Aorta (tissue), 5 donors: ENCODE measurements at regions of chr15 and their contacts with region 1.

Region 1: DNA sequence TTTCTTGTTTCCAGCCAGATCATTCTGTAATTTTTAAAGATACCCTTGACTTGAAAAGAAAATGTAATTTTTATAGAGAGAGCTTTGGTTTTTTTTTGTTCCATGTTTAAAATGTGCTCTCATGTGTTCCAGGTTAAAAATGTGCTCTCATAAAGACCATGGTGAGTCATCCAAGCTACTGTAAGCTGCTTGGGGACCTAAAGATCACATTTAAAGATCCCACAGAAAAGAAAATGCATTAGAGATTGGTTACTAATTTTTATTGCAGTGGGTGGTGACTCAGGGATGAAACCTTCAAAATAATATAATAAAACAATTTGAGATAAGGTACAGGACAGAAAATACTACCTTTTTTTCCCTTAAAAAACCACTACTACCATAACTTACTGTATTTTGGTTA is 11.0 kb downstream of the TCF12 start:
- DNase-seq: no peak
- ATAC-seq: no peak
- H3K4me3 ChIP-seq: no peak overlapping the region
- H3K27ac ChIP-seq: no peak overlapping the region
- H3K4me1 ChIP-seq: peaks cover 2 to 13% of the 10 kb centered on the region in 2 donors
- H3K27me3 ChIP-seq: no peaks in the 10 kb centered on the region

Region 2: GRCh38 chr15:56964182-56964581 is 34.8 kb after region 1 on chr15:
- intact Hi-C with region 1: loop called in 1 of 2 experiments (anchors 5 kb)
- DNase-seq: no peak
- ATAC-seq: no peak
- H3K4me3 ChIP-seq: no peak overlapping the region
- H3K27ac ChIP-seq: no peak overlapping the region
- H3K4me1 ChIP-seq: peaks cover 0 to 2% of the 10 kb centered on the region in 2 donors
- H3K27me3 ChIP-seq: no peaks in the 10 kb centered on the region

Region 3: DNA sequence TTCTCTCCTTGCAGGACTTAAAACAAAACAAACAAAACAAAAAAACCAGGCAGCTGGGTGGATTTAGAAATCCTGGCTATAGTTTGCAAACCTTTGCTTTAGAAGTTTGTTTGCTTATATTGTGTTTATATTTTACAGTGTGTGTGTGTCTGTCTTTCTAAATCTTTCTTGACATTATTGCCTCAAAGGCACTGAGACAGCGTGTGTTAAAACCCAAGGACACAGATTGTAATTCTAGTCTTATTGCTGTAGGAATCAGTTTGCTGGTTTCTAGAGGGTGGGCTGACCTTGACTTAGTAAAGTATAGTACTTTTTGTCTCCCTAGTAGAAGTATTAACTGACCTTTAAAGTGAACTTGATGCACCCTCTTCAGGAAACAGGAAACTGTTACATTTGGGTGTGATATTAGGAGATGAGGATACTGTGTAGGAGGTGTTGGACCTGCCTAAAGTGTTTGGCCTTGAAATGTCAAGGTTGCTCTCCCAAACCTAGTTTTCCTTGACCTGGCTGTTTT is 60.1 kb after region 1 on chr15:
- intact Hi-C with region 1: no loop called
- DNase-seq: no peak
- ATAC-seq: no peak
- H3K4me3 ChIP-seq: no peak overlapping the region
- H3K27ac ChIP-seq: no peak overlapping the region
- H3K4me1 ChIP-seq: no peaks in the 10 kb centered on the region
- H3K27me3 ChIP-seq: no peaks in the 10 kb centered on the region

Region 4: DNA sequence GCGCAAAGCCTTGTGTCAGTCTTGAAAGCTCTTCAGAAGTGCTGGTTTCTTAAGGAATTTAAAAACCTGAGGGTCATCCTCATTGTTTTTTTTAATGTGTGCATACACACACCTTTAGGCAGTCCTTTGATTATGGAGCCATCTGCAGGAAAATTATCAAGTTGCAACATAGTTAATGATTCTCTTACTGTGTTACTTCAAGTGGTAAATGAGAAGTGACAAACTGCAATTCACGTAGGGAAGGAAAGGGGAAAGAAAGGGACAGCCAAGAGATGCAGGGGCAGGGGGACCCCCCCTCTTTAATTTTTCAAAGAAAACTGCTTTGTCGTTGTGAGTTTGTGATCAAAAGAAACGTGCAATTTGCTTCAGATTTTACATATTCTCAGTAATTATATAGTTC is 284.5 kb after region 1 on chr15:
- intact Hi-C with region 1: loop called in 1 of 2 experiments (anchors 5 kb)
- DNase-seq: no peak
- ATAC-seq: peak; percentile 78
- H3K4me3 ChIP-seq: no peak overlapping the region
- H3K27ac ChIP-seq: no peak overlapping the region
- H3K4me1 ChIP-seq: peaks cover 0 to 2% of the 10 kb centered on the region in 2 donors
- H3K27me3 ChIP-seq: no peaks in the 10 kb centered on the region